Body of pancreas (tissue), 4 donors: ENCODE measurements at regions of chr3 and their contacts with region 1.

Region 1: DNA sequence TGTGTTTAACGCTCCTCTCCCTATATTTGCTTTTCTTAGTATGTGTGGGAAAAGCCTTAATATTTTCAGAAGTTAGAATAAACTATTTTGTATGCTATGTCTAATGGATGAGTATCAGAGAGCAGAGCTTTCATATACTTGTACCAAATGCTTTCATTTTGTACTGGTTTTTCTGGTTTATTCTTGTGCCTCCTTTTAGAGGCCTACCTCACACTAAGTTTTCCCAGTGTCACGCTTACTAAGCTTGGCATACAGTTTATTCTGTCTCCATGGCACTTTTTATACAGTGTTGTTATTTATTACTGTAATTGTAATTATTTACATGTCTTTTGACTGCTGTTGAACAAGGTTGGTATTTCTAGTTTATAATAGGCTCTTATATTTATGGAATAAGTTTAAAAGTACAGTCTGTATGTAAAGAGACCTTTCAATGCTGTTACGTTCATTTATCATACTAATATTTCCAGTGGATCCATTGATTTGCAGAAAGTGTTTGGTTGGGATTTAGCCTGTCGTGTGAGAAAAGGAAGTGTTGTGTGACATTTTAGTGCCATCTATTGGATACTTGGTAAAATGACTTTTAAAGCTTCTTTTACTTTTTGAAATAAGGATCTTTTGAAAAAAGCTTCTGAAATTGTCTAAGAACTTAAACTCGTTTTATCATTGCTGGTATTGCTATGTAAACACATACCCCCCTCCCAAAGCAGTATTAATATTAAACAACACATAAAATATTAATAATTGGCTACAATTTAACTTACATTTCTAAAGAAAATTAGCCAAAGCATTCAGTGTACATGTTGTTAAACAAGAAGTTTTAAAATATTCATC is 5.2 kb upstream of the EBLN2 start:
- DNase-seq: no peak
- ATAC-seq: peak; percentile 53
- H3K4me3 ChIP-seq: no peak overlapping the region
- H3K27ac ChIP-seq: peak overlapping the region in 1 of 4 donors; percentile 38
- H3K4me1 ChIP-seq: no peaks in the 10 kb centered on the region
- H3K27me3 ChIP-seq: no peaks in the 10 kb centered on the region
- CTCF ChIP-seq: peak in 6 of 7 experiments; percentile 45 to 75 (median 68)
- POLR2A ChIP-seq: no peak

Region 2: GRCh38 chr3:72862314-72863090 is 193.7 kb before region 1 on chr3:
- intact Hi-C with region 1: loop called (anchors 10 kb)
- DNase-seq: no peak
- ATAC-seq: no peak
- H3K4me3 ChIP-seq: no peak overlapping the region
- H3K27ac ChIP-seq: no peak overlapping the region
- H3K4me1 ChIP-seq: no peaks in the 10 kb centered on the region
- H3K27me3 ChIP-seq: no peaks in the 10 kb centered on the region
- CTCF ChIP-seq: no peak
- POLR2A ChIP-seq: no peak

Region 3: DNA sequence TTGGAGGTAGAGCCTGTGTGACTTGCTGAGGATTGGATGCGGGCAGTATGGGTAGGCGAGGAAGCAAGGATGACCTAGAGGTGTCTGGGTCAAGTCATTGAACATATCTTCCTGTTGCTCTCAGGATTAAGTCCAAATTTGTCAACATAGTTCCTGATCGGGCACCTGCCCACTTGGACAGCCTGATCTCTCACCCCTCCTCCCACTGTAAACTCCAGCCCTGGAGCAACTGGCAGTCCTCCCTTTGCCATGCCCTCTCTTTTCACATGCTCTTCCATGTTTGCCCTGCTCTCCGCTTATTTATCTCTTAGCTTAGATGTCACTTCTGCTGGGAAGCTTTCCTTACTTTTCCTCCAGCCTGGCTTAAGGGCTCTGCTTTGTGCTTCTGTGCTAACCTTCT is 107.2 kb before region 1 on chr3:
- intact Hi-C with region 1: loop called (anchors 10 kb)
- DNase-seq: no peak
- ATAC-seq: no peak
- H3K4me3 ChIP-seq: no peak overlapping the region
- H3K27ac ChIP-seq: no peak overlapping the region
- H3K4me1 ChIP-seq: no peaks in the 10 kb centered on the region
- H3K27me3 ChIP-seq: no peaks in the 10 kb centered on the region
- CTCF ChIP-seq: no peak
- POLR2A ChIP-seq: no peak